ENCODE measurements at regions of chr13 and their contacts with region 1.

Region 1: GRCh38 chr13:80217614-80218456 is 123.1 kb downstream of the SPRY2 start:
- DNase-seq: peak; percentile 70
- ATAC-seq: peak; percentile 79; the same call in 1 of the 2 replicates
- H3K4me3 ChIP-seq: no peak overlapping the region
- H3K27ac ChIP-seq: peak overlapping the region; percentile 76
- H3K4me1 ChIP-seq: peaks cover 13% of the 10 kb centered on the region
- H3K27me3 ChIP-seq: no peaks in the 10 kb centered on the region
- CTCF ChIP-seq: no peak

Region 2: GRCh38 chr13:80030491-80030890 is 187.3 kb before region 1 on chr13:
- CTCF ChIA-PET with region 1: no interaction called
- POLR2A ChIA-PET with region 1: no interaction called
- intact Hi-C with region 1: loop called (anchors 5 kb)
- DNase-seq: peak; percentile 88
- ATAC-seq: peak; percentile 98
- H3K4me3 ChIP-seq: no peak overlapping the region
- H3K27ac ChIP-seq: peak overlapping the region; percentile 69
- H3K4me1 ChIP-seq: peaks cover 23% of the 10 kb centered on the region
- H3K27me3 ChIP-seq: no peaks in the 10 kb centered on the region
- CTCF ChIP-seq: peak; percentile 64

Region 3: GRCh38 chr13:80048802-80049201 is 169.0 kb before region 1 on chr13:
- CTCF ChIA-PET with region 1: no interaction called
- POLR2A ChIA-PET with region 1: interaction called, 11 read pairs
- intact Hi-C with region 1: no loop called
- DNase-seq: peak; percentile 91
- ATAC-seq: peak; percentile 99
- H3K4me3 ChIP-seq: no peak overlapping the region
- H3K27ac ChIP-seq: peak overlapping the region; percentile 64
- H3K4me1 ChIP-seq: peaks cover 32% of the 10 kb centered on the region
- H3K27me3 ChIP-seq: no peaks in the 10 kb centered on the region
- CTCF ChIP-seq: no peak

Region 4: GRCh38 chr13:80083853-80084676 is 133.8 kb before region 1 on chr13:
- CTCF ChIA-PET with region 1: no interaction called
- POLR2A ChIA-PET with region 1: no interaction called
- intact Hi-C with region 1: no loop called
- DNase-seq: peak; percentile 64
- ATAC-seq: no peak
- H3K4me3 ChIP-seq: no peak overlapping the region
- H3K27ac ChIP-seq: peak overlapping the region; percentile 98
- H3K4me1 ChIP-seq: peaks cover 59% of the 10 kb centered on the region
- H3K27me3 ChIP-seq: no peaks in the 10 kb centered on the region
- CTCF ChIP-seq: no peak

Region 5: DNA sequence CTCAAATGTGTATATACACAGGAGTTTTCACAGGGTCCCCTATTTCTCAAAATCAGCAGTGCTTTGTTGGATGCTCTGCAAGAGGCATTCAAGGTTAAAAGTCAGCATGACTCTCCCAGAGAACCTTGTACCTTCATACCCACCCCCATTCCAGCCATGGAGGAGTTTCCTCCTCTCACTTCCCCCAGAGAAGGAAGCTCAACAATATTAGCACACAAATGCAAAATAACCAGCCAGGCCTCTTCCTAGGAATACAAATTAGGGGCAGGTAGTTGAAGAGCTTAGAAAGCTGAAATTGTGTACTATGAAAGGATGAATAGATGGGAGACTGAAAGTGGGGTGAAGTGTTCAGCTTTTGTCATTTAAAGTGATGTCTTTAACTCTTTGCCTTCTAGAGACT is 79.3 kb after region 1 on chr13:
- CTCF ChIA-PET with region 1: no interaction called
- POLR2A ChIA-PET with region 1: no interaction called
- intact Hi-C with region 1: no loop called
- DNase-seq: no peak
- ATAC-seq: no peak
- H3K4me3 ChIP-seq: no peak overlapping the region
- H3K27ac ChIP-seq: no peak overlapping the region
- H3K4me1 ChIP-seq: no peaks in the 10 kb centered on the region
- H3K27me3 ChIP-seq: no peaks in the 10 kb centered on the region
- CTCF ChIP-seq: no peak